Sigmoid colon (tissue), 7 donors: ENCODE measurements at regions of chr11 and their contacts with region 1.

Region 1: GRCh38 chr11:70755410-70756161 is 357.3 kb downstream of the CTTN start:
- DNase-seq: peak; percentile 82
- H3K4me3 ChIP-seq: no peak overlapping the region
- H3K27ac ChIP-seq: no peak overlapping the region
- H3K4me1 ChIP-seq: peaks cover 0 to 9% (median 3%) of the 10 kb centered on the region in 4 donors
- H3K27me3 ChIP-seq: no peaks in the 10 kb centered on the region
- CTCF ChIP-seq: peak; percentile 86 to 98 (median 98)
- EP300 ChIP-seq: no peak
- POLR2A ChIP-seq: no peak

Region 2: DNA sequence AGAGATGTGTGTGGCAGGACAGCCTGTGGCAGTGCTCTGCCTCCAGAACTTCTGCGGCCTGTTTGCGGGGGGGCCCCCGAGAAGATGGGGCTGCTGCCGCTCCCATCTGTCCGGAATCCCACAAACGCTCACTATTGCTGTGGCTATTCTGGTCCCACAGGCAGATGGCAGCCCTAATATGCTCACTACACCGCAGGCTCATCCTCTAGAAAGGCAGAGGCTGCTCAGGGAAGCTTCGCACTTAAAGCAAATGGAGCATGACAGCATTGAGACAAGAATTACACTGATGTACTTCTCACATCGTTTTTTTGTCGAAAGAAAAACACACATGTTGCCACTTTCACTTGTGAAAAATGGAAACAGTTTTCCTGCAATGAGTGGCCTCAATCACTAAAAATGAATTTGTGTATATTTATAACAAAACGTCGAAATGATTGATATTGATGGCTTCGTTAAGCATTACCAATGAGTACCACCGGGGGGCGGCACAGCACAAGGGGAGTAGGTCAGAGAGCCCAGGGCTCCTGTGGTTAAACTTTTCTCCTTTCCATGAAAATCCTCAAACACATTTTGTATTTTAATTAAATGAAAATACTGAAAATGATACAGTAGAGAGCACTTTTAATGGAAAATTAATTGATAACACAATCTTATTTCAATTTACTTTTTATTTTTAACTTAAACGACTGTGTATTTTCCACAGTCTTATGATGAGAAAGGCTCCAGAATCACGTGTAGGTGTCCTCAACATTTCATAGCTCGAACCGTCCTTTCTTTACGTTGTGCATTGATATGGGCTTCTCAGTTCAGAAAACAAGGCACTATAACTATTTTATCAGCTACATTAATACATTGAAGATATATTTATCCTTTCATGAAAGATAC is 288.1 kb before region 1 on chr11:
- intact Hi-C with region 1: loop called (anchors 1 kb)
- DNase-seq: no peak
- H3K4me3 ChIP-seq: no peak overlapping the region
- H3K27ac ChIP-seq: no peak overlapping the region
- H3K4me1 ChIP-seq: peaks cover 0 to 7% (median 0%) of the 10 kb centered on the region in 4 donors
- H3K27me3 ChIP-seq: no peaks in the 10 kb centered on the region
- CTCF ChIP-seq: peak; percentile 60 to 86 (median 82)
- EP300 ChIP-seq: no peak
- POLR2A ChIP-seq: no peak

Region 3: DNA sequence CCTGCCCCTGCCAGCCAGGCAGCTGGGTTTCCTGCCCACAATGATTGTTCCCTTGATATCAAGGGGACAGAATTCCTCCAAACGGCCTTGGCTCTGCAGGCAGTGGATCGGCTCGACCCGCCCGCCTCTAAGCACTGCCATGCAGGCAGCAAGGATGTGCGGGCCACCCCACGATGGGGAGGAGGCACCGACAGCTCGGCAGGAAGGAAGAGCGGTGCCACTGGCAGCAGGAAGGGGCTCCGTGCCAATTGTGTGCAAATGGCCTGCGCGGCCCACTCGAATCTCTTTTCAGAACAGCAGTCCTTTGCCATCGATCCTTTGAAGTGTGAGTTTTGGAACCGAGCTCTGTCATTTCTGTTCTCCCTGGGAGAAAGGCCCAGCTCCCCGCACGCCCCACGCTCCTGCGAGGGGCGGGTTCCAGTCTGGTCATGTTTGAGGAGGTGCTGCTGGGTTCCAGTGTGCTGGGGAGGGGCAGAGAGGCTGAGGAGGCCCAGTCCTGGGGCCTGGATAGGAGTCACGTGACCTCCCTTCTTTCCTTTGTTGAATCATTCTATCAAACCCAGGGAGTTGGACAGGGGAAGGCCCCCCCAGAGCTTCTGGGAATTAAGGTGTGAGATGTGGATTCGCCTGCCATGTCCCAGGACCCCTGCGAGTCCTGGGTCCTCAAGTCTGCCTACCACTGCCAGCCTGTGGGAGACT is 48.7 kb after region 1 on chr11:
- intact Hi-C with region 1: no loop called
- DNase-seq: no peak
- H3K4me3 ChIP-seq: no peak overlapping the region
- H3K27ac ChIP-seq: no peak overlapping the region
- H3K4me1 ChIP-seq: no peaks in the 10 kb centered on the region
- H3K27me3 ChIP-seq: no peaks in the 10 kb centered on the region
- CTCF ChIP-seq: no peak
- EP300 ChIP-seq: no peak
- POLR2A ChIP-seq: no peak

Region 4: DNA sequence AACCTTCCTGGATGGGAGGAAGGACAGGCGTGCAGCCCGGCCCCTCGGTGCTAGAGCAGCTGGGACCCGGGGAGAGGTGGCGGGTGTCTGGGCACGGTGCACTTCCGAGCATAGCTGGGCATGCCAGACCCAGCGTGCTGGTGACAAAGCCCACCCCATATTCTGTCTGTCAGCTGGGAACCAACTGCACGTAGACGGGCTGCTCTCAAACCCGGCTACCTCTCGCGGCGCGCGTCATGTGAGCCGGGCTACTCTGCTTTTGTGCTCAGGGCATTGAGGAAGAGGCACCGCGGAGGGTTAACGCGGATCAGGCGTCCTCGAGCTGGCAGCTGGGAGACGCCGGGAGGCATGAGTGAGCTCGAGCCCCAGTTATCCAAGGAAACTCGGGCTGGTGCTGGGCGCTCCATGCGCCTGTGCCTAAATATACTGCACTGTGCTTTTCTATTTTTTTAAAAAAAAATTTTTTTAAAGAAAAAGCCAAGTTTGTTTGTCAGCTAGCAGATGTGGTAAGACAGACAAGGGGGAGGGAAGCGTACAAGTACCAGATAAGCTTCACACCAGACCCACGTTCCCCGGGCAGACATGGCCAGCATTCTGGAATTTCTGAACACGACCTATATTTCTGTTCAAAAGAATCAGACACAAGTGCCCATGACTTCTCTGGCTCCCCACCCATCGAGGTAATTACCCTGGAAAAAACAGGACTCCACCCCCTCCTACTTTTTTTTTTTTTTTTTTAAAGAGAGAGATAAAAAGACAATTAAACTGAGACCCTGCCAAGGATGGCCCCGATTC is 71.2 kb after region 1 on chr11:
- intact Hi-C with region 1: no loop called
- DNase-seq: peak; percentile 81
- H3K4me3 ChIP-seq: peak overlapping the region; percentile 31 to 48 (median 43)
- H3K27ac ChIP-seq: peak overlapping the region; percentile 68 to 80 (median 74)
- H3K4me1 ChIP-seq: peaks cover 2 to 41% (median 24%) of the 10 kb centered on the region in 4 donors
- H3K27me3 ChIP-seq: peaks cover 0 to 32% (median 0%) of the 10 kb centered on the region in 3 donors
- CTCF ChIP-seq: no peak
- EP300 ChIP-seq: no peak
- POLR2A ChIP-seq: no peak

Region 5: DNA sequence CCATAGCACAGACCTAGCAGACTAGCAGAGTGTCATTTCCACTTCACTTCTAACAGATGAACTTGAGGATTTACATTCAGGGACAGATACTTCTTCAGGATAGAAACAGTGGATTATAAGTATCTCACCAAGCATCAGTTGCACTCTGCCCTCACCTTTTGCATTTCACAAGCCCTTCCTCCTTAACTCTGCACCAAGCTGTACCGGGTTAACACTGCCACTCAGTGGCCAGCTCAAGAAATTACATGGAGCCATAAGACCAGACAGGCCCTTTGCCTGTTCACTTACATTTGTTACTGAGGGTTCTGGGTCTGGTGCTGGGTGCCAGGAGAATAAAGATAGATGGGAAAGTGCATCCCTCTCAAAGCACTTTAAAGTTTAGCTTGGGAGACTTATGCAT is 187.0 kb after region 1 on chr11:
- intact Hi-C with region 1: no loop called
- DNase-seq: no peak
- H3K4me3 ChIP-seq: no peak overlapping the region
- H3K27ac ChIP-seq: no peak overlapping the region
- H3K4me1 ChIP-seq: no peaks in the 10 kb centered on the region
- H3K27me3 ChIP-seq: no peaks in the 10 kb centered on the region
- CTCF ChIP-seq: no peak
- EP300 ChIP-seq: no peak
- POLR2A ChIP-seq: no peak